Naive thymus-derived CD4-positive, alpha-beta T cell (primary cell): ENCODE measurements at regions of chr1 and their contacts with region 1.

Region 1: GRCh38 chr1:95072532-95073419 is at the start of gene ALG14:
- DNase-seq: peak; percentile 81 to 96 (median 95)
- ATAC-seq: peak; percentile 96
- H3K4me3 ChIP-seq: peak within 1 kb of the TSS; percentile 96
- H3K4me3 Mint-ChIP-seq: peak within 1 kb of the TSS; percentile 88 to 100 (median 98)
- H3K27ac ChIP-seq: peak within 1 kb of the TSS; percentile 85
- H3K27ac Mint-ChIP-seq: peak within 1 kb of the TSS; percentile 95 to 100 (median 97)
- H3K4me1 ChIP-seq: peaks cover 8 to 12% of the 10 kb centered on the region in 2 donors
- H3K4me1 Mint-ChIP-seq: peaks cover 10 to 26% (median 18%) of the 10 kb centered on the region in 7 donors
- H3K27me3 ChIP-seq: no peaks in the 10 kb centered on the region
- H3K27me3 Mint-ChIP-seq: peaks cover 0 to 6% (median 0%) of the 10 kb centered on the region in 5 donors
- total RNA-seq, gene ALG14: 1.1 to 2.2 (median 1.5) TPM

Region 2: GRCh38 chr1:93878889-93879586 is 1193.7 kb before region 1 on chr1 and contains the start of gene DNTTIP2:
- CTCF ChIA-PET with region 1: no interaction called
- POLR2A ChIA-PET with region 1: interaction called, 4 read pairs
- intact Hi-C with region 1: loop called in 1 of 2 experiments (anchors 10 kb)
- DNase-seq: peak; percentile 73 to 89 (median 86)
- ATAC-seq: peak; percentile 90
- H3K4me3 ChIP-seq: peak within 1 kb of the TSS; percentile 83
- H3K4me3 Mint-ChIP-seq: peak within 1 kb of the TSS; percentile 92 to 99 (median 97)
- H3K27ac ChIP-seq: peak within 1 kb of the TSS; percentile 94
- H3K27ac Mint-ChIP-seq: peak within 1 kb of the TSS; percentile 96 to 99 (median 98)
- H3K4me1 ChIP-seq: peaks cover 21 to 25% of the 10 kb centered on the region in 2 donors
- H3K4me1 Mint-ChIP-seq: peaks cover 34 to 62% (median 54%) of the 10 kb centered on the region in 7 donors
- H3K27me3 ChIP-seq: no peaks in the 10 kb centered on the region
- H3K27me3 Mint-ChIP-seq: no peaks in the 10 kb centered on the region
- total RNA-seq, gene DNTTIP2: 51.8 to 84.2 (median 77.5) TPM

Region 3: GRCh38 chr1:94854458-94855306 is 218.1 kb before region 1 on chr1:
- CTCF ChIA-PET with region 1: interaction called, 3 read pairs
- POLR2A ChIA-PET with region 1: no interaction called
- intact Hi-C with region 1: loop called in 1 of 2 experiments (anchors 1 kb)
- DNase-seq: peak; percentile 52 to 83 (median 74)
- ATAC-seq: peak; percentile 99
- H3K4me3 ChIP-seq: peak overlapping the region; percentile 47
- H3K4me3 Mint-ChIP-seq: no peak overlapping the region
- H3K27ac ChIP-seq: peak overlapping the region; percentile 43
- H3K27ac Mint-ChIP-seq: no peak overlapping the region
- H3K4me1 ChIP-seq: peaks cover 0 to 3% of the 10 kb centered on the region in 2 donors
- H3K4me1 Mint-ChIP-seq: no peaks in the 10 kb centered on the region
- H3K27me3 ChIP-seq: no peaks in the 10 kb centered on the region
- H3K27me3 Mint-ChIP-seq: peaks cover 0 to 14% (median 5%) of the 10 kb centered on the region in 5 donors

Region 4: GRCh38 chr1:95043141-95043980 is 29.4 kb before region 1 on chr1:
- CTCF ChIA-PET with region 1: interaction called, 6 read pairs
- POLR2A ChIA-PET with region 1: no interaction called
- intact Hi-C with region 1: loop called in 1 of 2 experiments (anchors 1 kb)
- DNase-seq: peak; percentile 57 to 81 (median 75)
- ATAC-seq: peak; percentile 100
- H3K4me3 ChIP-seq: no peak overlapping the region
- H3K4me3 Mint-ChIP-seq: no peak overlapping the region
- H3K27ac ChIP-seq: no peak overlapping the region
- H3K27ac Mint-ChIP-seq: no peak overlapping the region
- H3K4me1 ChIP-seq: no peaks in the 10 kb centered on the region
- H3K4me1 Mint-ChIP-seq: no peaks in the 10 kb centered on the region
- H3K27me3 ChIP-seq: no peaks in the 10 kb centered on the region
- H3K27me3 Mint-ChIP-seq: no peaks in the 10 kb centered on the region

Region 5: GRCh38 chr1:95233737-95234500 is 161.1 kb after region 1 on chr1 and contains the start of gene RWDD3:
- CTCF ChIA-PET with region 1: interaction called, 8 read pairs
- POLR2A ChIA-PET with region 1: interaction called, 14 read pairs
- intact Hi-C with region 1: loop called (anchors 1 kb)
- DNase-seq: peak; percentile 86 to 96 (median 93)
- ATAC-seq: peak; percentile 98
- H3K4me3 ChIP-seq: peak within 1 kb of the TSS; percentile 78
- H3K4me3 Mint-ChIP-seq: peak within 1 kb of the TSS; percentile 89 to 97 (median 92)
- H3K27ac ChIP-seq: peak within 1 kb of the TSS; percentile 79
- H3K27ac Mint-ChIP-seq: peak within 1 kb of the TSS; percentile 86 to 97 (median 91)
- H3K4me1 ChIP-seq: peaks cover 6 to 12% of the 10 kb centered on the region in 2 donors
- H3K4me1 Mint-ChIP-seq: peaks cover 23 to 54% (median 46%) of the 10 kb centered on the region in 7 donors
- H3K27me3 ChIP-seq: no peaks in the 10 kb centered on the region
- H3K27me3 Mint-ChIP-seq: peaks cover 16 to 30% (median 23%) of the 10 kb centered on the region in 5 donors
- total RNA-seq, gene RWDD3: 9.1 to 27.9 (median 20.0) TPM